GM10248 (cell line): ENCODE measurements at regions of chr2 and their contacts with region 1.

Region 1: DNA sequence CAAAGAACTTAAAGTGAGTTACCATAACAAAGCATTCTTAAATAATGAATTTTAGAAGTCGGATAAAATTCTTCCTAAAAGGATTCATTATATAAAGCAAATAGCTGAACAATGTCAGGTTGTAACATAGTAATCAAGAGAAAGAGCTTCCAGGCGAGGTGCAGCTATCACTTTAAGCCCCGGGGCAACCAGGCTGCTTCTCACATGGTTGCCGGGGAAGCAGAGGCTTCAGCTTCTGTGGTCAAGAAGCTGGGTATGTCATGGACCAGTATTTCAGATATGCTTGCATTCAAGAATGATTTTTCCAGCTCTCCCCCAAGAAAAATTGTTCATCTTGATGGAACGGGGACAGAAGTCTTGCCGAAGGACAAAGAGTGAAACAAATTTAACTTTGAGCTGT is 23.6 kb upstream of the KYNU start:
- DNase-seq: no peak
- CTCF ChIP-seq: no peak

Region 2: GRCh38 chr2:142834021-142834420 is 19.9 kb before region 1 on chr2:
- CTCF ChIA-PET with region 1: interaction called, 13 read pairs
- POLR2A ChIA-PET with region 1: no interaction called
- DNase-seq: no peak
- CTCF ChIP-seq: no peak

Region 3: DNA sequence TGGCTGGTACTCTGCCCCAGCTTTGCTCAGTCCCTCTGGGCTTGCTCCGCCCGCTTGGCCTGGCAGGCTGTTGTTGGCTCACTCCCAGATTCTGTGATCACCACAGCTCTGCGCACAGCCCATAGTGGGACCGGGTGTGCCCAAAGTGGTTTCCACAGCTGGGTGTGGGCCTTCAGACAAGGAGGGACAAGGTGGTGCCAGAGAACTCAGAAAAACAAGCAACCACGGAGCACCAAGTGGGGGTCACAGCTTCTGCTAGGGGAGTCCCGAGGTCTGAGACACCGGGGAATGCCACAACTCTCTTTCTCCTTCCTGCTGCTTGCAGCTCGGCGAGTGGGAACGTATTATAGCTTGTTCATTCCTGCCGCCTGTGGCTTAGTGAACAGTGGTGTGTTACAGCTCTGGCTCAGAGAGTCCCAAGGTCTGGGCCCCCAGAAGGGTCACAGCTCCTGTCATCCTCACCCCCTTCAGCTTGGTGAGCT is 14.4 kb after region 1 on chr2:
- CTCF ChIA-PET with region 1: interaction called, 11 read pairs
- POLR2A ChIA-PET with region 1: no interaction called
- DNase-seq: no peak
- CTCF ChIP-seq: no peak

Region 4: GRCh38 chr2:143068509-143068908 is 214.6 kb after region 1 on chr2:
- CTCF ChIA-PET with region 1: no interaction called
- POLR2A ChIA-PET with region 1: no interaction called
- DNase-seq: no peak
- CTCF ChIP-seq: no peak